ENCODE measurements at regions of chr1 and their contacts with region 1.

Region 1: GRCh38 chr1:201447911-201448871 is 20.8 kb downstream of the PHLDA3 start:
- DNase-seq: peak; percentile 39
- H3K4me3 Mint-ChIP-seq: no peak overlapping the region
- H3K27ac Mint-ChIP-seq: no peak overlapping the region
- H3K4me1 Mint-ChIP-seq: peaks cover 37% of the 10 kb centered on the region
- H3K27me3 Mint-ChIP-seq: peaks cover 10% of the 10 kb centered on the region

Region 2: DNA sequence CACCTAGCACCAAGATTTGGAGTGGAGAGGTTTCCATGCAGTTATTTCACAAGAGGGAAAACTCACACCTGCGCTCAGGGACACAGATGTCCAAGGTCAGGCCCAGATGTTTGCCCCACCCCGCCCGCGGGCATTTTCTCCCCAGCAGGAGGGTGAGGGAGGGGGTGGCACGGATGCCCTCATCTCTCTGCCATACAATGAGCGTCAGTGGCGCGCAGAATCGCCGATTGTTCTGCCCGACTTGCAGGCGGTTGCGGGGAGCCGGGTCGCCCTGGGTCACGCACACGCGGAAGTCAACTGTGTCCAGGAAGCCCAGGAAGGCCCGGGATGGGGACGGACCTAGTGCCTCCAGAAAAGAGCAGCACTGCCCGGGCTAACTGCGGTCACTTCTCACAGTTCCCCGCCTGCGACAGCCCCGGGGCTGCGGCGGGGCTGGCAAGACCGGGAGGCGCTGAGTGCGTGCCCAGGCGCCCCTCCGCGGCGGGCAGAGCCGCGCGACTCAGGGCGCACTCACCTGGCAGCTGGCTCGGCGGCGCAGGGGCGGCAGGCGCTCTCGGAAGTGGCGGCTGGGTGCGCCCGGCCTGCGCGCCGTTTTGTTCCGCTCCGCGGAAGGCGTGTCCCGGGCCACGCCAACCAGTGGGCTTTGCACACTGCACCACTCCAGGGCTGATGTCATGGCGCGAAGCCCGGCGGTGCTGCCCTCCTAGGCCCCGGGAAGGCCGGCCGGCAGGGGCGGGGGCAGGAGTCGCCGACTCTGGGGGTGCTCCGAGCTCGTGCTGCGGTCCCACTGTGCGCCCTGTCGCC is 58.6 kb after region 1 on chr1 and contains the start of gene CSRP1:
- intact Hi-C with region 1: loop called (anchors 1 kb)
- DNase-seq: peak; percentile 78
- H3K4me3 Mint-ChIP-seq: peak within 1 kb of the TSS; percentile 93
- H3K27ac Mint-ChIP-seq: peak within 1 kb of the TSS; percentile 89
- H3K4me1 Mint-ChIP-seq: peaks cover 53% of the 10 kb centered on the region
- H3K27me3 Mint-ChIP-seq: no peaks in the 10 kb centered on the region
- total RNA-seq, gene CSRP1: 66.0 and 66.2 TPM in 2 replicates

Region 3: DNA sequence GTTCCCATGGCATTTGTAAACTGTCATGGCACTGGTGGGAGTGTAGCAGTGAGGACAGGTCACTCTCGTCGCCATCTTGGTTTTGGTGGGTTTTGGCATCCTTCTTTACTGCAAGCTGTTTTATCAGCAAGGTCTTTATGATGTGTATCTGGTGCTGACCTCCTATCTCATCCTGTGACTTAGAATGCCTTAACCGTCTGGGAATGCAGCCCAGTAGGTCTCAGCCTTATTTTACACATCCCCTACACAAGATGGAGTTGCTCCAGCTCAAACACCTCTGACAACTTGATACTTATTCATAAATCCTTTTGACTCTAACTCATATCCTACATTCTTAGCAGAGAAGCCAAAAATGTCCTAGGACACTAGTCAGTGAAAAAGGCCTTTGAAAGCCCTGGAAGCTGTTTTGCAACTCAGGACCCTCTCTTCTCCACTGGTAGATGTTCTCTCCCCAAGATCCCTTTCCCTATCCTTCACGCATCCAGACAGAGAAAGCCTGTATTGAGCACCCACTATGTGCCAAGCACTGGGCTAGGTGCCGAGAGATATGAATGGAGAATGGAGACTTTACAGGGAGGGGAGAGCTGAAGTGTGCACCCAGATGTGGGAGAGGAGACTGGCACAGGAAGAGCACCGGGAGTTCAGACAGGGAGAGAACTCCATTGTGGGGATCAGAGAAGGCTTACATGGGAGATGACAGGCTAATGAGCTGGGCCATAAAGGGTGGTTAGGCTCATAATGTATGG is 65.5 kb after region 1 on chr1:
- intact Hi-C with region 1: loop called (anchors 1 kb)
- DNase-seq: no peak
- H3K4me3 Mint-ChIP-seq: no peak overlapping the region
- H3K27ac Mint-ChIP-seq: no peak overlapping the region
- H3K4me1 Mint-ChIP-seq: peaks cover 15% of the 10 kb centered on the region
- H3K27me3 Mint-ChIP-seq: no peaks in the 10 kb centered on the region

Measured in activated T-helper 1 cell treated with anti-CD3 and anti-CD28 coated beads, Interleukin-12 subunit alpha, Interleukin-12 subunit beta, Interleukin-2, Interleukin-4 antibody, amounts not matched to agents 30 ng/mL and 10 ng/mL and 1 ng/mL, durations not matched to agents 14 hours and 24 hours and 36 hours (primary cell).